ENCODE measurements at regions of chr21 and their contacts with region 1.

Region 1: DNA sequence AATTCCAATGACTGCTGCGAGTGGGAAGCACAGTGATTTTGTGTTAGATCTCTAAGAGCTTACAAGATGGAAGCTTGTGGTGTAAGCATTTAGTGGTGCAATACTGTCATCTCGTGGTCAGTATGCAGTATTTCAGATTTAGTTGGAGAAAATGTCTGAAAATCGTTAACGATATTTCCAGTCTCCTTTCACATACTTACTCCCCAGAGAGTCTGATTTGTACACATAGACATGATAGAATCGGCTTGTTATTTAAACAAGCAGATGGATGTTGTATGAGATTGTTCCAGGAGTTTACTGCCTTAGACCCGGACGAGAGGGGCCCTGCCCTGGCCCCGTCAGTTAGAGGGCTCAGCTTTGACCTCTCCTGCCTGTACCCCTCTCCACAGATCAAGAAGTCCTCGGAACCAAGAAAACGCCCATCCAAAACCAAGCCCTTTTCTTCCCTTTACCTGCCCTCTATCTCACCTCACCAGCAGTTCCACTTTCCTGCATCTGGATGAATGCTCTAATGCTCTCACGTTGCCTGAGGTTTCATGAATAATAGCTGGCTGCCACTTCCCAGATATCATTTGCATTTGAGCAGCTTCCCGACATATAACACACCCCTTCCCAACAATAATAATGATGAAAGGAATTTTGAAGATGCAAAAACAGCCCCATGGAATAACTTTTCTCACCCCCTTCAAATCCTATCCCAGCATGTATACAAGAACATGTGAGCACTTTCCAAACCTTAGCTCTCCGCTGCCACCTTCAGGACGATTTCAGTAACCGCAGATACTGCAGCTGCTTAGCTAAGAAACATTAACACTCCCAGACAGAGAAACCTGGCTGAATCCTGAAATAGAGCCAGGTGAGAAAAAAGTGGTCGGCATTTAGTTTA is 247.3 kb downstream of the LTN1 start:
- DNase-seq: peak; percentile 81 to 84
- ATAC-seq: peak; percentile 95
- H3K4me3 ChIP-seq: peak overlapping the region; percentile 22 to 40
- H3K27ac ChIP-seq: peak overlapping the region in 1 of 2 donors; percentile 47
- H3K4me1 ChIP-seq: no peaks in the 10 kb centered on the region
- H3K27me3 ChIP-seq: no peaks in the 10 kb centered on the region

Region 2: GRCh38 chr21:27570306-27570868 is 1175.0 kb before region 1 on chr21:
- intact Hi-C with region 1: loop called in 1 of 2 experiments (anchors 5 kb)
- DNase-seq: peak; percentile 76 to 79
- ATAC-seq: peak; percentile 74
- H3K4me3 ChIP-seq: no peak overlapping the region
- H3K27ac ChIP-seq: peak overlapping the region; percentile 30 to 76
- H3K4me1 ChIP-seq: peaks cover 0 to 4% of the 10 kb centered on the region in 2 donors
- H3K27me3 ChIP-seq: no peaks in the 10 kb centered on the region

Region 3: GRCh38 chr21:28069450-28069923 is 675.9 kb before region 1 on chr21:
- intact Hi-C with region 1: loop called in 1 of 2 experiments (anchors 10 kb)
- DNase-seq: no peak
- ATAC-seq: no peak
- H3K4me3 ChIP-seq: no peak overlapping the region
- H3K27ac ChIP-seq: no peak overlapping the region
- H3K4me1 ChIP-seq: no peaks in the 10 kb centered on the region
- H3K27me3 ChIP-seq: no peaks in the 10 kb centered on the region

Region 4: DNA sequence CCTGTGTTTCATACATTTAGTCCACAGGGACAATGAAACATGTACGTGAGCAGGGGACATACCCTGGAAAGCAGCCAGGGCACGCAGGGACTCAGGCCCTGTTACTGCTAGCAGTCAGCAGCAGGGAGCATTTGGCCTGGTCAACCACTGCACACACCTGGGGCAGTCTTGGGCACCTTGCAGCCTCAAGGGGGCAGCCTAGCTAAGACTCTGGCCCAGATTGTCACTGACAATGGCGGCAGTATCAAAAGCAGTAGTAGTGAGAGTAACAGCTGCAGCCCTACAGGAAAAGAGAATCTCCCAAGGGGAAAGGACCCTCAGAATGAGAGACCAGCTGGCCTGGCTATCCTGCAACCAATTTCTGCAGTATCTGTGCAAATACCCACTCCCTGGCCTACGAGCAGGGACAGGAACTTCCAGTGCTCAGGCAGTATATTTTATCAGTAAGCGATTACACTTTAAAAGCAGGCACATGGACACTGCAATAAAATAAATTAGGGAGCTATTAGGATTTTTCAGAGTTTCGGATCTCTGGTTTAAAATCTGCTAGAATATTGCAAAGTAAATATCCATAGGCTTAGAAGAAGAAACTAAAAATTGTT is 228.3 kb before region 1 on chr21:
- intact Hi-C with region 1: loop called in 1 of 2 experiments (anchors 5 kb)
- DNase-seq: peak; percentile 50 to 79
- ATAC-seq: peak; percentile 68
- H3K4me3 ChIP-seq: no peak overlapping the region
- H3K27ac ChIP-seq: no peak overlapping the region
- H3K4me1 ChIP-seq: no peaks in the 10 kb centered on the region
- H3K27me3 ChIP-seq: no peaks in the 10 kb centered on the region

Region 5: GRCh38 chr21:28663111-28663693 is 82.2 kb before region 1 on chr21:
- intact Hi-C with region 1: loop called in 1 of 2 experiments (anchors 5 kb)
- DNase-seq: peak in 1 of 2 donors; percentile 62
- ATAC-seq: peak; percentile 88
- H3K4me3 ChIP-seq: no peak overlapping the region
- H3K27ac ChIP-seq: no peak overlapping the region
- H3K4me1 ChIP-seq: peaks cover 0 to 3% of the 10 kb centered on the region in 2 donors
- H3K27me3 ChIP-seq: no peaks in the 10 kb centered on the region

Region 6: GRCh38 chr21:28943631-28944030 is 198.3 kb after region 1 on chr21:
- intact Hi-C with region 1: loop called (anchors 5 kb)
- DNase-seq: no peak
- ATAC-seq: no peak
- H3K4me3 ChIP-seq: no peak overlapping the region
- H3K27ac ChIP-seq: peak overlapping the region in 1 of 2 donors; percentile 57
- H3K4me1 ChIP-seq: no peaks in the 10 kb centered on the region
- H3K27me3 ChIP-seq: no peaks in the 10 kb centered on the region

Measured in aorta (tissue), 5 donors.